ENCODE measurements at regions of chr2 and their contacts with region 1.

Region 1: DNA sequence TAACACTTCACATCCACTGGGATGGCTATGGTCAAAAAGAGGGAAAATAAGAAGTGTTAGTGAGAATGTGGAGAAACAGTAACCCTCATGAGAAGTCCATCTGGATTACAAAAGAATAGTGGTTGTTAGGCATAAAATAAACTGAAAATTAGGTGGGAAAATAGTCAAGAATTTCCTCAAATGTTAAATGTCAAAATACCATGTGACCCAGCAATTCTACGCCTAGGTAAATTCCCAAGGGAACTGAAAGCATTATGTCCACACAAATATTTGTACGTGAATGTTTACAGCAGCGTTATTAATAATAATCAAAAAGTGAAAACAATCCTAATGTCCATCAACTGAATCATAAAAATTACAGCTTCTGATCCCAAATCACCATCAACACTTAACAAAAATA is 11.0 kb downstream of the WDR33 start:
- DNase-seq: no peak
- ATAC-seq: no peak
- H3K4me3 ChIP-seq: no peak overlapping the region
- H3K4me3 Mint-ChIP-seq: no peak overlapping the region
- H3K27ac ChIP-seq: no peak overlapping the region
- H3K27ac Mint-ChIP-seq: no peak overlapping the region
- H3K4me1 ChIP-seq: peaks cover 43% of the 10 kb centered on the region
- H3K4me1 Mint-ChIP-seq: peaks cover 78% of the 10 kb centered on the region
- H3K27me3 ChIP-seq: no peaks in the 10 kb centered on the region
- H3K27me3 Mint-ChIP-seq: no peaks in the 10 kb centered on the region
- CTCF ChIP-seq: no peak

Region 2: DNA sequence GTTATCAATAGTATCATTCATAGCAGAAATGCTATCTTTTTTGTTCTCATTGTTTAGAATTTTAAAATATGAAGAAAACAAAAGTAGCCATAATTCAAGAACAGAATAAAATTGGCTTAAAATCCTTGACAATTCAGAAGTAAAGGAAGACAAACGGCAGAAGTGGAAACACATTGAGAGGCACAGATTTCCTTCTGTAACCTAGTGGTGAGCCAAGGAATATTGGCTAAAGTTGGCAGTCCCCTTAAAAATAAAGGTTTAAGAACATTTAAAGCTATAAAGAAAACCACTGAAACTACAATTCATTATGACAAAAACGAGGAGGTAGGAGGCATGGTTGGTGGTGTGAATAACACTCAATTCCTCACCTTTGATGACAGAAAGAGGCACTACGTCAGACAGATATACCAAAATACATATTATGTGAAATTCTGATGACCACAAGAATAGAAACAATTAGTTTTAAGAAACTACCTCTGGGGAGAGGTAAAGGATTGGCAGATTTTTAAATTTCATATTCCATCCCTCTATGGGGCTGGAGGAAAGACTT is 56.4 kb before region 1 on chr2:
- CTCF ChIA-PET with region 1: no interaction called
- POLR2A ChIA-PET with region 1: no interaction called
- intact Hi-C with region 1: loop called in 1 of 2 experiments (anchors 2 kb)
- DNase-seq: no peak
- ATAC-seq: no peak
- H3K4me3 ChIP-seq: no peak overlapping the region
- H3K4me3 Mint-ChIP-seq: no peak overlapping the region
- H3K27ac ChIP-seq: no peak overlapping the region
- H3K27ac Mint-ChIP-seq: no peak overlapping the region
- H3K4me1 ChIP-seq: no peaks in the 10 kb centered on the region
- H3K4me1 Mint-ChIP-seq: peaks cover 19% of the 10 kb centered on the region
- H3K27me3 ChIP-seq: no peaks in the 10 kb centered on the region
- H3K27me3 Mint-ChIP-seq: no peaks in the 10 kb centered on the region
- CTCF ChIP-seq: no peak

Region 3: GRCh38 chr2:128016620-128017019 is 216.7 kb after region 1 on chr2:
- CTCF ChIA-PET with region 1: no interaction called
- POLR2A ChIA-PET with region 1: no interaction called
- intact Hi-C with region 1: no loop called
- DNase-seq: no peak
- ATAC-seq: no peak
- H3K4me3 ChIP-seq: no peak overlapping the region
- H3K4me3 Mint-ChIP-seq: no peak overlapping the region
- H3K27ac ChIP-seq: no peak overlapping the region
- H3K27ac Mint-ChIP-seq: no peak overlapping the region
- H3K4me1 ChIP-seq: no peaks in the 10 kb centered on the region
- H3K4me1 Mint-ChIP-seq: no peaks in the 10 kb centered on the region
- H3K27me3 ChIP-seq: no peaks in the 10 kb centered on the region
- H3K27me3 Mint-ChIP-seq: no peaks in the 10 kb centered on the region
- CTCF ChIP-seq: no peak

Measured in CD4-positive, alpha-beta T cell (primary cell).